ENCODE measurements at regions of chr12 and their contacts with region 1.

Region 1: GRCh38 chr12:110742718-110743570 is at the start of gene PPP1CC:
- DNase-seq: peak; percentile 83 to 97 (median 91)
- ATAC-seq: peak; percentile 94
- H3K4me3 ChIP-seq: peak within 1 kb of the TSS; percentile 63 to 77
- H3K4me3 Mint-ChIP-seq: peak within 1 kb of the TSS; percentile 99
- H3K27ac ChIP-seq: peak within 1 kb of the TSS; percentile 60 to 69
- H3K27ac Mint-ChIP-seq: peak within 1 kb of the TSS; percentile 97
- H3K4me1 ChIP-seq: peaks cover 37% of the 10 kb centered on the region
- H3K4me1 Mint-ChIP-seq: peaks cover 40% of the 10 kb centered on the region
- H3K27me3 ChIP-seq: no peaks in the 10 kb centered on the region
- H3K27me3 Mint-ChIP-seq: no peaks in the 10 kb centered on the region
- CTCF ChIP-seq: no peak
- total RNA-seq, gene PPP1CC: 147 to 158 TPM

Region 2: GRCh38 chr12:109477185-109477962 is 1265.6 kb before region 1 on chr12 and contains the starts of genes KCTD10 and UBE3B:
- CTCF ChIA-PET with region 1: no interaction called
- POLR2A ChIA-PET with region 1: no interaction called
- intact Hi-C with region 1: loop called in 1 of 2 experiments (anchors 5 kb)
- DNase-seq: peak; percentile 73 to 94 (median 86)
- ATAC-seq: peak; percentile 90
- H3K4me3 ChIP-seq: peak within 1 kb of the TSS; percentile 92 to 94
- H3K4me3 Mint-ChIP-seq: peak within 1 kb of the TSS; percentile 97
- H3K27ac ChIP-seq: peak within 1 kb of the TSS; percentile 76 to 94
- H3K27ac Mint-ChIP-seq: peak within 1 kb of the TSS; percentile 98
- H3K4me1 ChIP-seq: peaks cover 35% of the 10 kb centered on the region
- H3K4me1 Mint-ChIP-seq: peaks cover 51% of the 10 kb centered on the region
- H3K27me3 ChIP-seq: no peaks in the 10 kb centered on the region
- H3K27me3 Mint-ChIP-seq: no peaks in the 10 kb centered on the region
- CTCF ChIP-seq: no peak
- total RNA-seq, gene KCTD10: 26.2 to 31.3 TPM
- total RNA-seq, gene UBE3B: 16.5 to 17.8 TPM

Region 3: DNA sequence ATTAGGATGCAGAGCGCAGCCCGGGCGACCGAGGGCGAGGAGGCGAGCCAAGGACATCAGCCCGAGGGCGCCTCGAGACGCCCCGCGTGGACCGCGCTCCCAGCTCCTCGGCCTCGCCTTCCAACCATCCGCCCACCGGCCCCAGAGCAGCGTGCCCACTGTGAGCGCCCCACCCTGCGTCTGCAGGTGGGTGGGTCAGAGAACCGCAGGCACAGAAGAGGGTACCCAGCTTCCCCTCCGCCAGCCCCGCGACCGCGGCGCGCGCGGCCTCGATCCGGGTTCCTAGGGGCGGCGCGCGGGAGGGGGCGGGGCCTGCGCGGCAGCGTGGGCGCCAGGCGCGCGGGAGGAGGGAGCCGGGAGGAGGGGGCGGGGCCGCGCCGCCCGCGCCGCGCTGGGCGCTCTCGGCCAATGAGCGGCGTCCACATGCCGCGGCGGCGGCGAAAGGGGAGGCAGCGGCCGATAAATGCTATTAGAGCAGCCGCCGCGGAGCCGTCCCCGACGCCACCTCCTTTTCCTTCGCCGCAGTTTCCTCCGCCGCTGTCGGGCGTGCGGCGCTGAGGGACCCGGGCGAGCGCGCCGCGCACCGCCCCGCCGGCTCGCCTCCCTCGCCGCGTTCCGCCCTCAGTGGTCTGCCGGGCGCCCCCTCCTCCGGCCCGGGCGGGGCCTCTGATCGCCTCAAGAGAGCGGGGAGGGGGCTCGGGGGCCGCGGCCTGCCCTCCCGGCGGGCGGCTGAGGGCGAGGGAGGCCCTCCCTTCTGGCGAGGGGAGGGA is 462.0 kb before region 1 on chr12 and contains the start of gene ATP2A2:
- CTCF ChIA-PET with region 1: no interaction called
- POLR2A ChIA-PET with region 1: no interaction called
- intact Hi-C with region 1: loop called (anchors 2 to 5 kb)
- DNase-seq: peak; percentile 75 to 97 (median 90)
- ATAC-seq: peak; percentile 89
- H3K4me3 ChIP-seq: peak within 1 kb of the TSS; percentile 60 to 82
- H3K4me3 Mint-ChIP-seq: peak within 1 kb of the TSS; percentile 91
- H3K27ac ChIP-seq: peak within 1 kb of the TSS; percentile 70 to 77
- H3K27ac Mint-ChIP-seq: peak within 1 kb of the TSS; percentile 94
- H3K4me1 ChIP-seq: peaks cover 35% of the 10 kb centered on the region
- H3K4me1 Mint-ChIP-seq: peaks cover 46% of the 10 kb centered on the region
- H3K27me3 ChIP-seq: no peaks in the 10 kb centered on the region
- H3K27me3 Mint-ChIP-seq: no peaks in the 10 kb centered on the region
- CTCF ChIP-seq: no peak
- total RNA-seq, gene ATP2A2: 100 to 105 TPM

Region 4: GRCh38 chr12:110468212-110469048 is 274.5 kb before region 1 on chr12 and contains the starts of genes FAM216A and GPN3:
- CTCF ChIA-PET with region 1: no interaction called
- POLR2A ChIA-PET with region 1: no interaction called
- intact Hi-C with region 1: loop called (anchors 1 to 2 kb)
- DNase-seq: peak; percentile 89 to 98 (median 95)
- ATAC-seq: peak; percentile 89
- H3K4me3 ChIP-seq: peak within 1 kb of the TSS; percentile 90 to 96
- H3K4me3 Mint-ChIP-seq: peak within 1 kb of the TSS; percentile 99
- H3K27ac ChIP-seq: peak within 1 kb of the TSS; percentile 74 to 87
- H3K27ac Mint-ChIP-seq: peak within 1 kb of the TSS; percentile 95
- H3K4me1 ChIP-seq: peaks cover 23% of the 10 kb centered on the region
- H3K4me1 Mint-ChIP-seq: peaks cover 43% of the 10 kb centered on the region
- H3K27me3 ChIP-seq: no peaks in the 10 kb centered on the region
- H3K27me3 Mint-ChIP-seq: no peaks in the 10 kb centered on the region
- CTCF ChIP-seq: no peak
- total RNA-seq, gene FAM216A: 3.5 to 4.5 TPM
- total RNA-seq, gene GPN3: 5.9 to 6.2 TPM

Region 5: GRCh38 chr12:110661337-110661972 is 81.5 kb before region 1 on chr12:
- CTCF ChIA-PET with region 1: no interaction called
- POLR2A ChIA-PET with region 1: no interaction called
- intact Hi-C with region 1: loop called in 1 of 2 experiments (anchors 5 kb)
- DNase-seq: peak in 8 of 9 experiments; percentile 38 to 88 (median 64)
- ATAC-seq: peak; percentile 85
- H3K4me3 ChIP-seq: peak overlapping the region; percentile 8 to 35
- H3K4me3 Mint-ChIP-seq: peak overlapping the region; percentile 76
- H3K27ac ChIP-seq: peak overlapping the region; percentile 14 to 80
- H3K27ac Mint-ChIP-seq: peak overlapping the region; percentile 90
- H3K4me1 ChIP-seq: peaks cover 19% of the 10 kb centered on the region
- H3K4me1 Mint-ChIP-seq: peaks cover 24% of the 10 kb centered on the region
- H3K27me3 ChIP-seq: no peaks in the 10 kb centered on the region
- H3K27me3 Mint-ChIP-seq: no peaks in the 10 kb centered on the region
- CTCF ChIP-seq: no peak

Region 6: DNA sequence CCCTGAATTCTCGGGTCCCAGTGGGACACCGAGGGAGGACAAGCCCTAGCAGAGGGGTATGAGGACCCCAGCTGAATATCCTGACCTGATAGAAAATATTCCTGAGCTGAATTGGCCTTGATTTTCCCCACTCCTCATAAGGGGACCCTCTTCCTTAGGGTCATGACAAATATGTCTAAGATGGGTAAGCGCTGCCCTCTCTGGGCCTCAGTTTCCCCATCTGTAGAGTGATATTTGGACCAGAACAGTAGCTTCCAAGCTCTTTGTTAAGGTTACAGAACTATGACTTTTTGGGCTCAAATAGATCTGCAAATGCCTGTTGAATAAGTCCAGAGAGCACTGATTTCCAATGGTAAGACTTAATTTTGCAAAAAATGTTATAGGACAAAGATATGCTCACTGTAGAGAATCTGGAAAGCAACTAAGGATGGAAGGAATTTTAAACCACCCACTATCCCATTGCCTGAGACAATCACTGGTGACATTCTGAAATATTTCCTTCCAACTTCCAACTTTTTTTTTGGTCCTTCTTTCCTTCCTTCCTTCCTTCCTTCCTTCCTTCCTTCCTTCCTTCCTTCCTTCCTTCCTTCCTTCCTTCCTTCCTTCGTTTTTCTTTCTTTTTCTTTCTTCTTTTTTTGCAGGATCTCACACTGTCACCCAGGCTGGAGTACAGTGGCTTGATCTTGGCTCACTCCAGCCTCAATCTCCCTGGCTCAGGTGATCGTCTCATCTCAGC is 145.5 kb after region 1 on chr12:
- CTCF ChIA-PET with region 1: no interaction called
- POLR2A ChIA-PET with region 1: no interaction called
- intact Hi-C with region 1: loop called in 1 of 2 experiments (anchors 5 kb)
- DNase-seq: no peak
- ATAC-seq: no peak
- H3K4me3 ChIP-seq: no peak overlapping the region
- H3K4me3 Mint-ChIP-seq: peak overlapping the region; percentile 94
- H3K27ac ChIP-seq: no peak overlapping the region
- H3K27ac Mint-ChIP-seq: no peak overlapping the region
- H3K4me1 ChIP-seq: no peaks in the 10 kb centered on the region
- H3K4me1 Mint-ChIP-seq: peaks cover 4% of the 10 kb centered on the region
- H3K27me3 ChIP-seq: no peaks in the 10 kb centered on the region
- H3K27me3 Mint-ChIP-seq: no peaks in the 10 kb centered on the region
- CTCF ChIP-seq: peak; percentile 48

Region 7: GRCh38 chr12:112409064-112409905 is 1666.3 kb after region 1 on chr12 and contains the start of gene RPL6:
- CTCF ChIA-PET with region 1: no interaction called
- POLR2A ChIA-PET with region 1: no interaction called
- intact Hi-C with region 1: loop called in 1 of 2 experiments (anchors 10 kb)
- DNase-seq: peak; percentile 56 to 93 (median 75)
- ATAC-seq: peak; percentile 81
- H3K4me3 ChIP-seq: peak within 1 kb of the TSS; percentile 83 to 89
- H3K4me3 Mint-ChIP-seq: peak within 1 kb of the TSS; percentile 100
- H3K27ac ChIP-seq: peak within 1 kb of the TSS; percentile 87 to 92
- H3K27ac Mint-ChIP-seq: peak within 1 kb of the TSS; percentile 100
- H3K4me1 ChIP-seq: peaks cover 28% of the 10 kb centered on the region
- H3K4me1 Mint-ChIP-seq: peaks cover 38% of the 10 kb centered on the region
- H3K27me3 ChIP-seq: no peaks in the 10 kb centered on the region
- H3K27me3 Mint-ChIP-seq: no peaks in the 10 kb centered on the region
- CTCF ChIP-seq: no peak
- total RNA-seq, gene RPL6: 1,700 to 1,770 TPM